Cardiac septum (tissue), 1 donor: ENCODE measurements at regions of chr4 and their contacts with region 1.

Region 1: GRCh38 chr4:107853444-107854355 is 29.0 kb downstream of the SGMS2 start:
- DNase-seq: no peak

Region 2: GRCh38 chr4:107896158-107897045 is 42.7 kb after region 1 on chr4:
- intact Hi-C with region 1: loop called (anchors 5 kb)
- DNase-seq: no peak